ENCODE measurements at regions of chr14 and their contacts with region 1.

Region 1: GRCh38 chr14:50085570-50086320 is 30.6 kb downstream of the VCPKMT start:
- DNase-seq: peak; percentile 70
- CTCF ChIP-seq: no peak

Region 2: DNA sequence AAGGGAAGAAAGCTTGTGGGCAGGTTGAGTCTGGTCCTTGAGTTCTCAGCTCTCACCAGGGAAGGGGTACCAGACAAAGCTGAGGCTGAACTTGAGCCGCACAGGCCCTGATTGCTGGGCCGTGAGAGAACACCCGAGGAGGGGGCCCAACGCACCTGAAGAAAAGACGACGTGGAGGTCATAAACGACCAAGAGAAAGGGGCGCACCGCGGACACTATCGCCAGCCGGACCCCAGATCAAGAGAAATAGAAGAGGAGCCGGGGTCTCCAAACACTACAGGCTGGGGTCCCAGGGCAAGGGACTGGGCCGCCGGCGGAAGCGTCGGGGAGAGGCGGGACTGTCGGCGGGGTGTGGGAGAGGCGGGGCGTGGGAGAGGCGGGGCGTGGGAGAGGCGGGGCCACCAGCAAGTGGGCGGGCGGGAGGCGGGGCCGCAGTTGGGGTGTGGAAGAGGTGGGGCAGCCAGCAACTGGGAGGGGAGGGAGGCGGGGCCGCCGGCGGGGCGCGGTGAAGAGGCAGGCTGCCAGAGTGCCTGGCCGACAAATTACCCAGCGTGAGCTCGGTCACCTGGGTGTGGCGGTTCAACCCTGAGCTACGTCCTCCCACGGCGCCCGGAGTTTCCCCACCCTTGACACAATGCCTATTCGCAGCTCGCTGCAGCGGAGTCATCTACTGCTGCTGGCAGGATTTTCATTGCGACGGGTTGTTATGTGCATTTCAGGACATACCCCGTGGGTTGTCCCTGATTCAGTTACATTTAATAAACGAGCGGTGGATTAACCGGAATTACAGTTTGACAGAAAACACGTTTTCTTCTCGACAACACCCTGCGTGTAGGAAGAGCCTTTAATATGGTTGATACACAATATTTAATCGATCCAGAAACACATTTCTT is 217.7 kb before region 1 on chr14:
- in situ Hi-C with region 1: loop called (anchors 10 kb)
- DNase-seq: peak; percentile 92
- CTCF ChIP-seq: no peak